ENCODE measurements at regions of chr11 and their contacts with region 1.

Region 1: GRCh38 chr11:62427630-62428233 is 8.9 kb downstream of the SCGB1A1 start:
- DNase-seq: peak; percentile 7
- H3K4me3 Mint-ChIP-seq: peak overlapping the region; percentile 55
- H3K27ac Mint-ChIP-seq: peak overlapping the region; percentile 96
- H3K4me1 Mint-ChIP-seq: peaks cover 46% of the 10 kb centered on the region
- H3K27me3 Mint-ChIP-seq: no peaks in the 10 kb centered on the region

Region 2: GRCh38 chr11:62383822-62384221 is 43.9 kb before region 1 on chr11:
- intact Hi-C with region 1: loop called (anchors 2 kb)
- DNase-seq: no peak
- H3K4me3 Mint-ChIP-seq: no peak overlapping the region
- H3K27ac Mint-ChIP-seq: no peak overlapping the region
- H3K4me1 Mint-ChIP-seq: peaks cover 19% of the 10 kb centered on the region
- H3K27me3 Mint-ChIP-seq: peaks cover 10% of the 10 kb centered on the region

Region 3: DNA sequence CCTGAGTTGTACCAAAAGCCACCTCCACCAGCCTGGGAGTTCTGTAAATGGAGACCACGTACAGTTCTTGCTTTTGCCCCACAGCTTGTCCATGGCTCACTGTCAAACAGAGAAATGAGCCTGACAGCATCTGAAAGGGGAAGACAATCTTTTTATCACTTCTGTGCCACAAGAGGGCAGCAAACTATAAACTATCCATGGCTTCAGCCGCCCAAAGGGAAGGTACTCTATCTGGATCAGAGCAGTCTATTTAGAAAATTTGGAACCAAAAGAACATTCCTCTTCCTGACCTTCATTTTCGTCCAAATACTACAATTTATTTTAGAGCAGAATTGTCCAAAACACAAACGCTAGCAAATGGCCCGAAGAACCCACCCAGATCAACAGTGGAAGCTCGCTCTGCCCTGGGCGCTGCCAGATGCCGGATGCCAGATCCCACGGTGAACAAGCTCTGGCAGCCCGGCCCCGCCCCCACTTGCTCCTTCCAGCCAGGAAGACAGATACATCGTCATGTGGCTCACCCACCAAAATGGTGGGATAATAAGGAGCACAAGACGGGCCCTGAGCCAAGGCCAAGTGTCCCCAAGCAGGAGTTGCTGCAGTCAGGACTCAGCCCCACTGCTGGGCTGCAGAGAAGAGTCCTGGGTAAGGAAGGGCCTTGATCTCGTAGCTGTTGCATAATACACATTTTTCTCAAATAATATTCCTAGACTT is 32.8 kb before region 1 on chr11:
- intact Hi-C with region 1: loop called (anchors 2 kb)
- DNase-seq: peak; percentile 48
- H3K4me3 Mint-ChIP-seq: no peak overlapping the region
- H3K27ac Mint-ChIP-seq: no peak overlapping the region
- H3K4me1 Mint-ChIP-seq: peaks cover 8% of the 10 kb centered on the region
- H3K27me3 Mint-ChIP-seq: peaks cover 2% of the 10 kb centered on the region

Region 4: DNA sequence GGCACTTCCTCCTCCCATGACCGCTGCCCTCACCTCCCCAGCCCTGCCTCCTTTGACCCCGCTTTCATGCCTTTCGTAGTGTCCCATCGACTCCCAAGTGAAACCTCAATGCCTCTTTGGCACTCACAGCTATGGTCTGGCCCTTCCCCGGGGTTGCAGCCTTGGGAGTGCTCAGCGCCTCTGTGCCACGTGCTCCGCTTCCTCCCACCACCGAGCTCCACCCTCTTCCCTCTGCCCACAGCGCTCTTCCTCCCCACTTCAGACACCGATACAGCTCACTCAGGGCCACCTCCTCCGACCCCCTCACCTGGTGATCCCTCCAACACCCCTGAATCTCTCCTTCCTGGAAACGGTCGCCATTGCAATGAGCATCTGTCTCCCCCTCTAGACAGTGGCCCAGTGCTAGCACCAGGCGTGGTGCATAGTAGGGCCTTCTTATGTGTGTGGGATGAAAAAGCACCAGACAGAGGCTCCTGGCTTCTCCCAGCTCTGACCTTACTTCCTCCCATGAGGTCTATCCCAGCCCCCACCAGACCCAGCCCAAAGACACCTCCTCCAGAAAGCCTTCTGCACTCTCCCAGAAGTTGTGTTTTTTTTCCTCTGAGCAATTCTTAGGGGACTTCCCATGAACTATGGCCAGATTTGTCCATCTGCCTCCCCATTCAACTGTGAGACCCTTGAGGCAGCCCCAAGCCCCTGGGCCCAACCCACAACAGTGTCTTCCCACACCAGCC is 25.3 kb before region 1 on chr11:
- intact Hi-C with region 1: loop called (anchors 1 kb)
- DNase-seq: peak; percentile 45
- H3K4me3 Mint-ChIP-seq: peak overlapping the region; percentile 69
- H3K27ac Mint-ChIP-seq: peak overlapping the region; percentile 77
- H3K4me1 Mint-ChIP-seq: peaks cover 25% of the 10 kb centered on the region
- H3K27me3 Mint-ChIP-seq: peaks cover 6% of the 10 kb centered on the region

Region 5: DNA sequence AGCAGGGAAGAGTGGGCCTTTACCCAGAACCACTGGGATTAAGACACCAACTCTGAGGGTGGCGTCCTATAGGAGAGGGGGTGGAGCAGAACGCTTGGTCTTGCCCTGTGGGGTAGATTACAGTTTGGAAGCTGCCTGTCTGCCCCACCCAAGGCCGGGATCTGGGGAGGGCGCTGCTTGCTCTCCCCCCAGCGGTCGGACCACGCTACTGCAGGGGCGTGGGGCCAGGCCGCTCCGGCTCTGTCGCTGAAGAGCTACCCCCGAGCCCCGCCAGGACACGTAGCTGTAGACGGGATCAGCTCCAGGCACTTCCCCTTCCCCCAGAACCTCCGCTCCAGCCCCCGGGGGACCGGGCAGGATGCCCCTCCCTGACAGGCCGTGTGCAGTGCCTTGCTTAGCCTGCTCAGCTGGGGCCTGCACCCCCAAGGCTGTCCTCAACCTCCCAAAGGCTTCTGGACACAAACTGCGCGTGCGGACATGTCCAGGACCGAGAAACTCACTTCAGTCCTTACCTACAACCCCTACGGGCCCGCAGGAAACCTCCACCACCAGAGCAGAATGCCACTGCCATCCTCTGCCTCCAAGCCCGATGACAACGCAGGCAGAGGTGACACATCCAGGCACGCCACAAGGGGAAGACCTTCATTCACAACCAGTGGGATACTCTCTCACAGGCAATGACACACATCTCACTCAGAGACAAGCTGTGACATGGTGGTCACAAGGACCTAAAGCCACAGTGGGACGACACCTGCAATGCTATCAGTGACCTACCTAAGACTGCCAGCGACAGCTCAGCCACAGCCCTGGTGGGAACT is 115.2 kb after region 1 on chr11:
- intact Hi-C with region 1: loop called (anchors 1 kb)
- DNase-seq: peak; percentile 69
- H3K4me3 Mint-ChIP-seq: peak overlapping the region; percentile 97
- H3K27ac Mint-ChIP-seq: peak overlapping the region; percentile 95
- H3K4me1 Mint-ChIP-seq: peaks cover 75% of the 10 kb centered on the region
- H3K27me3 Mint-ChIP-seq: peaks cover 3% of the 10 kb centered on the region

Region 6: GRCh38 chr11:62671575-62672389 is 244.1 kb after region 1 on chr11 and contains the starts of genes LBHD1 and UQCC3:
- intact Hi-C with region 1: loop called (anchors 10 kb)
- DNase-seq: peak; percentile 75
- H3K4me3 Mint-ChIP-seq: peak within 1 kb of the TSS; percentile 97
- H3K27ac Mint-ChIP-seq: peak within 1 kb of the TSS; percentile 98
- H3K4me1 Mint-ChIP-seq: peaks cover 34% of the 10 kb centered on the region
- H3K27me3 Mint-ChIP-seq: no peaks in the 10 kb centered on the region
- total RNA-seq, gene LBHD1: 23.4 and 24.3 TPM in 2 replicates
- total RNA-seq, gene UQCC3: 8.9 and 11.4 TPM in 2 replicates

Measured in activated T-helper 1 cell treated with anti-CD3 and anti-CD28 coated beads, Interleukin-12 subunit alpha, Interleukin-12 subunit beta, Interleukin-2, Interleukin-4 antibody, amounts not matched to agents 30 ng/mL and 10 ng/mL and 1 ng/mL, durations not matched to agents 14 hours and 24 hours and 36 hours (primary cell).